Left ventricle myocardium superior (tissue), 1 donor: ENCODE measurements at regions of chr11 and their contacts with region 1.

Region 1: GRCh38 chr11:94511932-94512781 is at the start of gene C11orf97:
- DNase-seq: peak; percentile 76
- ATAC-seq: peak; percentile 83
- total RNA-seq, gene C11orf97: not detected

Region 2: DNA sequence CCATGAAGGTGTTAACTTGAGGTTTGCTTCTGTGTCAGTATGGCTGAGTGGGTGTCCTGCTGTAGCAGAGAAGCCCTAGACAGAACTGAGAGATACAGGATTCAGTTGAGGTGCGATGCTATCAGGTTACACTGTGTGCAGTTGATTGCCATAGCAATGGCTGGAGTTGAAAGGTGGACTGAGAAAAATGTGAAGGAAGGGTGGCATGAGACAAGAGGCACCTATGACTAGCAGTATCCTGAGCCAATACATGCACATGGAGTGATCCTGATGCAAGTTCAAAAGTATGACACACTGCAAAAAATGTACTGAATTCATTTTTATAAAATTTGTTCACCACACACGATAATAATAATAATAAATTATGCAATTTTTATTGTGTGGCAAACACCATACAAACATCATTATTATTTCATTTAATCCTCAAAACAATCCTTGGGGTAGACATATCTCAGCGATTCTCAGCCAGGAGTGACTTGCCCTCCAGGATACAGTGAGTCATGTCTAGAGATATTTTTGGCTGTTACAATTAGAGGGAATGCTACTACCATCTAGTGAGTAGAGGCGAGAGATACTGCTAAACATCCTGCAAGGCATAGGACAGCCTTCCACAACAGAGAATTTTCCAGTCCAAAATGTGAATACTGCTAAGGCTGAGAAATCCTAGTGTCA is 51.2 kb after region 1 on chr11:
- intact Hi-C with region 1: loop called (anchors 10 kb)
- DNase-seq: no peak
- ATAC-seq: peak; percentile 99